Natural killer cell (primary cell): ENCODE measurements at regions of chr1 and their contacts with region 1.

Region 1: DNA sequence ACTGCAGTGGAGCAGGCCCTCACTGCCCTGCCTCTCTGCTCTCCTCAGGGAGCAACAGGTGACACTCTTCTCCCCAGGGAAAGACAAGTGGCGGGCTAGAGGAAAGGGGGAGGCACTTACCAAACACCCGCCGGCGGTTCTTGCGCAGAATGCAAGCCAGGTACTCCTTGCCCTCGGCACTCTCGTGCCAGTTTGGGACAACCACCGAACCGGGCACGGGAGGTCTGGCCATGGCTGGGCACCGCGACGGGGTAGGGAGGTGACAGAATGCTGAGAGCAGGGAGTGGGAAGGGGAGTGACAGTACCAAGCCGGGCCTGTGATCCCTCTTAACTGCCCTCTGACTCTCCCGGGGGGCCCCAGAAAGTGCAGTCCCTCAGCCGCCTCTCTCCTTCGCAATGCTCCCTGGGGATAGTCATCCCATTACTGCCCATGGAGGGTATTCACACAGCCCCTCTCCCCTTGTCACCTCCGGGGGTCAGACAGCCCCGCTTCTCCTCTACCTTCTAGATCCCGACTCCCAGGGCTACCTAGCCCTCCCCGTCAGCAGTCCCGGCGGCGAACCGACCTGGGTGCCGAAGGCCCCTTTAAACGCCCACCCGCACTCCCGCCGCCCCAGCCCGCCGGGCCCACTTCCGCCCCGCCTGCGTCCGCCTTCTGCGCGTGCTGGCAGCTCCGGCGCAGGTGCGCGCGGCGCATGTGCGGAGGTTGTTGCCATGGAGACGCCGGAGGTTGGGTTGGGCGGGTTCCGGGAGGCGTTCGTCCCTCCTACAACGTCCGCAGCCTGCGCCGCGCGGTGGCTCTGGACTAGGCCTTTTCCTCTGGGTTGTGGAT is at the start of gene CPLANE2:
- DNase-seq: peak; percentile 95 to 98
- ATAC-seq: peak; percentile 91 to 92 (median 92)
- H3K4me3 ChIP-seq: peak within 1 kb of the TSS; percentile 97
- H3K4me3 Mint-ChIP-seq: peak within 1 kb of the TSS; percentile 94
- H3K27ac ChIP-seq: peak within 1 kb of the TSS; percentile 92
- H3K27ac Mint-ChIP-seq: peak within 1 kb of the TSS; percentile 92 to 94
- H3K4me1 ChIP-seq: peaks cover 24% of the 10 kb centered on the region
- H3K4me1 Mint-ChIP-seq: peaks cover 15 to 28% of the 10 kb centered on the region in 2 donors
- H3K27me3 ChIP-seq: no peaks in the 10 kb centered on the region
- H3K27me3 Mint-ChIP-seq: no peaks in the 10 kb centered on the region
- CTCF ChIP-seq: no peak
- total RNA-seq, gene CPLANE2: 7.6 to 10.8 (median 8.3) TPM

Region 2: GRCh38 chr1:16206547-16207317 is 30.0 kb before region 1 on chr1:
- intact Hi-C with region 1: loop called (anchors 2 kb)
- DNase-seq: peak; percentile 88 to 97
- ATAC-seq: peak; percentile 90 to 94 (median 91)
- H3K4me3 ChIP-seq: peak overlapping the region; percentile 70
- H3K4me3 Mint-ChIP-seq: peak overlapping the region; percentile 86
- H3K27ac ChIP-seq: peak overlapping the region; percentile 88
- H3K27ac Mint-ChIP-seq: peak overlapping the region; percentile 86 to 95
- H3K4me1 ChIP-seq: peaks cover 16% of the 10 kb centered on the region
- H3K4me1 Mint-ChIP-seq: peaks cover 0 to 34% of the 10 kb centered on the region in 2 donors
- H3K27me3 ChIP-seq: no peaks in the 10 kb centered on the region
- H3K27me3 Mint-ChIP-seq: no peaks in the 10 kb centered on the region
- CTCF ChIP-seq: no peak

Region 3: DNA sequence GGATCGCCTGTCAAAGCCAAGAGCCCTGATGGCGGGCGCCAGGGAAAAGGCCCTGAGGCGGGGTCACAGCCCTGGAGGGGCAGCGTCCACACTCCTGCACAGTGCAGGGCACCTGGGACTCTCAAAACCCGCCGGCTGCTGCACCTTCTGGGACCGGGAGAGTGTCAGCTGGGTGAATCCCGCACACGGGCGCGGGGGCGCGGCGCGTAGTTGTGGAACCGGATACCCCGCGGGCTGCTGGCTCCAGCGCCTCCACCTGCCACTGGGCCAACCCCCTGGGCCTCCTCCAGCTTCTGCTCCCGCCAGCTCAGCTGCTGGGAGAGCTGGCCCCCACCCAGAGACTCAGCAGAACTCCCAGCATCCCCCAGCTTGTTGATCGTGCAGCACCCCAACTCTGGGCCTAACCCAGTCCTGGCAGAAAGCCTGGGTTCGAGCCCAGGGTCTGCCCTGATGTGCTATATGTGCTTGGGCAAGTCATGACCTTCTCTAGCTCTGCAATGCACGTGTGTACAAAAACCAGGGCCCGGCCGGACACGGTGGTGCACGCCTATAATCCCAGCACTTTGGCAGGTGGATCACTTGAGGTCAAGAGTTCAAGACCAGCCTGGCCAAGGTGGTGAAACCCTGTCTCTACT is 237.6 kb after region 1 on chr1:
- intact Hi-C with region 1: no loop called
- DNase-seq: no peak
- ATAC-seq: no peak
- H3K4me3 ChIP-seq: no peak overlapping the region
- H3K4me3 Mint-ChIP-seq: no peak overlapping the region
- H3K27ac ChIP-seq: no peak overlapping the region
- H3K27ac Mint-ChIP-seq: no peak overlapping the region
- H3K4me1 ChIP-seq: no peaks in the 10 kb centered on the region
- H3K4me1 Mint-ChIP-seq: peaks cover 0 to 8% of the 10 kb centered on the region in 2 donors
- H3K27me3 ChIP-seq: no peaks in the 10 kb centered on the region
- H3K27me3 Mint-ChIP-seq: no peaks in the 10 kb centered on the region
- CTCF ChIP-seq: no peak